H1 (cell line): ENCODE measurements at regions of chr17 and their contacts with region 1.

Region 1: GRCh38 chr17:81440876-81441244 is 45.6 kb downstream of the BAHCC1 start:
- DNase-seq: peak; percentile 50 to 90
- H3K4me3 ChIP-seq: no peak overlapping the region
- H3K27ac ChIP-seq: no peak overlapping the region
- H3K4me1 ChIP-seq: peaks cover 0 to 2% (median under 1%) of the 10 kb centered on the region in 4 experiments; a peak in 3 of 7 replicates
- H3K27me3 ChIP-seq: no peaks in the 10 kb centered on the region
- CTCF ChIP-seq: peak; percentile 88 to 98 (median 94)
- EP300 ChIP-seq: no peak
- POLR2A ChIP-seq: no peak
- RAD21 ChIP-seq: peak; percentile 67 to 73

Region 2: DNA sequence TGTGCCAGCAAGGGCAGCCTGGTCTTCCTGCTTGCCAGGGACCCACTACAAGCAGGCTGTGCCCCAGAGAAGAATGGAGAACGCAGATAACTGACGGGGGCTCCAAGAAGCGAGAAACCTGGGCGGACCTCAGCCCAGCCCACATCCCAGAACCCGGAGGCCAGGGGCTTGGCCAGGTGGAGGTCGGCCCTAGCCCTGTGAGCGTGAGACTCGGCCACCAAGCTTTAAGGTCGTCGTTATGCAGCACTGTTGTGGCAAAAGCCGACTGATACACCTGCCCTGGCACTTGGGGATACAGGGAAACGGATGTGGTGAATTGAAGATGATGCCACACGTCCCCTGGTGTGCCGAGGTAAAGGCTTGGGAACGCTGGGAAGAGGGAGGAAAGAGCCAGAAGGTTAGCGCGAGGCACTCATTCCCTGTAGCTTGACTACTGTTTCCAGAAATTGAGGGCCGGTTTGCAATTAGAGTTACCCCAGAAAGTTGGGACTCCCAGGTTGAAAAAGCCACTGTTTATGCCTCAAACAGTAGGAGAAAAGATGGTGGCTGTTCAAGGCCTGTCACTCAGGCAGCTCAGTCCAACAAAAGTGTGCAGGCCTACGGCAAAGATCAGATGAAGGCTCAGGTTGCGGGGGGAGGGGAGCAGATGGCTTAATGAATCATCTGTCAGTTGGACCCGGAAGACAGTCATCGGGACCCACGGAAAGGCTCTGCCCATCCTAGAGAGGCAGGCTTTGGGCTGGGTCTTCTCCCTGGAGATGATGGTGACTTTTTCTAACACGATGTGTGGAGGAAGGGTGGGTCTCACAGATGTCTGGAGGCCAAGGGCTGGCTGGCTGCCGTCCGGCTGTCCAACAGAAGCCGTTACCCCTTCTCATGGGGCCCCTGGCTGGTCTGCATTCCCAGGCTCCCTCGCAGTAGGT is 91.2 kb before region 1 on chr17:
- CTCF ChIA-PET with region 1: no interaction called
- POLR2A ChIA-PET with region 1: no interaction called
- DNase-seq: no peak
- H3K4me3 ChIP-seq: no peak overlapping the region
- H3K27ac ChIP-seq: no peak overlapping the region
- H3K4me1 ChIP-seq: peaks cover 0 to 7% (median 3%) of the 10 kb centered on the region in 4 experiments; a peak in 3 of 7 replicates
- H3K27me3 ChIP-seq: peaks cover 16 to 41% (median 34%) of the 10 kb centered on the region in 4 experiments
- CTCF ChIP-seq: no peak
- EP300 ChIP-seq: no peak
- POLR2A ChIP-seq: no peak
- RAD21 ChIP-seq: no peak

Region 3: DNA sequence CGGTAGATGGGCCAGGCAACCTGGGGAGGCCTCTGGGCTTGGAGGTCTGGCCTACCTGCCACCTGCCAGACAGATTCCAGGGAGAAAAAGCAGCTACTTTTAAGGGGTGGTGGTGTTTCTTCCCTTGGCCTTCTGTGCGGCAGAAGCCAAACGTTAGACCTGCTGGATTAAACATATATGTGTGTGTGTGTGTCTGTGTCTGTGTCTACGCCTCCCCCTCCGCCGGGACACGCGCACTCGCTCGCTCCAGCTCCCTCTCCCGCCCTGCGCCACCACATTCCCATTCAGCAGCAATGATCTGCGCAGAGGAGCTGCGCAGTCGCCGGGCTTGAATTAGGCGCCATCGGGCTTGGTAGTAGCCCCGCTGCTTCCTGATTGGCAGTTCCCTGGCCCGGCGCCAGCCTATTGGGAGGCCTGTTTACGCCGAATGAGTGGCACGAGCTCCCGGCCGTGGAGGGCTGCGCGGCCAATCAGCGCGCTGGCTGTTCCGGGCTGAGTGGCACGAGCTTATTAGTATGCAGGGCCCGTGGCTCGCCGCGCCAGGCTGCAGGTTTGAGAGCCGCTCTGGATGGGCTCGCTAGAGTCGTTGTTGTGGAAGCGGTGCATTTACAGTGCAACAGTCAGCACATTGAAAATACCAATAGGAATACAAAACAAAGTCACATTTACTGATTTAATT is 45.8 kb before region 1 on chr17 and contains the start of gene BAHCC1:
- CTCF ChIA-PET with region 1: interaction called, 13 read pairs
- POLR2A ChIA-PET with region 1: no interaction called
- DNase-seq: peak; percentile 95 to 97
- H3K4me3 ChIP-seq: peak within 1 kb of the TSS; percentile 37 to 65 (median 47)
- H3K27ac ChIP-seq: no peak within 1 kb of the TSS
- H3K4me1 ChIP-seq: peaks cover 6 to 33% (median 27%) of the 10 kb centered on the region in 4 experiments
- H3K27me3 ChIP-seq: peaks cover 43 to 62% (median 55%) of the 10 kb centered on the region in 4 experiments; a peak in 6 of 7 replicates
- CTCF ChIP-seq: 0 out of 4 replicates have a peak, but pooled peaks of 1 of the 3 experiments have one; percentile 1
- EP300 ChIP-seq: no peak
- POLR2A ChIP-seq: no peak
- RAD21 ChIP-seq: no peak
- total RNA-seq, gene BAHCC1: 0.58 and 0.71 TPM in 2 replicates

Region 4: DNA sequence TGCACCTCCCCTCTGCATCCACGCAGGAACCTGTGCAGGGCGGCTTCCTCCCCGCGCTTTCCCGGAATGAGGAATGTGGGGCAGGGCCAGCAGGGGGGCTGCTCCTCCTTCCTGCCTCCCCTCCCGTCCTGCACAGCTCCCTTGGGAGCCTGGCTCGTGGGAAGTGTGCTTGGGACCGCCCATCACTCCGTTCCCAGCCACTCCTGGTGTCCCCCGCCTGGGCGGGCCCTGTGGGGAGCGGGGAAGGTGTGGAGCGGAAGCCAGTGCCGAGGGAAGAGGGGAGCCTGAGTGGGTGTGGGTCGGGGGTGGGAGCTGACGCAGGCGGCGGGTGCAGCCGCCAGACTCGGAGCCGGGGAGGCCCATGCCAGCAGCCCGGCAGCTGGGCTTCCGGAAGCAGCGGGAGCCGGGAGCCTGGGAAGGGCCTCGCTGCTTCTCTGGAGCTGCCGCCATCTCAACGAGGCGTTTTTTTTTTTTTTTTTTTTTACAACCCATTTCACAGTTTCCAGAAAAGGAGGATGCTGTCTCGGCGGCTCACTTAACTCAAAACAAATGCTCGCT is 21.5 kb before region 1 on chr17:
- CTCF ChIA-PET with region 1: interaction called, 31 read pairs
- POLR2A ChIA-PET with region 1: interaction called, 3 read pairs
- DNase-seq: no peak
- H3K4me3 ChIP-seq: no peak overlapping the region
- H3K27ac ChIP-seq: no peak overlapping the region
- H3K4me1 ChIP-seq: peaks cover 0 to 16% (median 9%) of the 10 kb centered on the region in 4 experiments; a peak in 6 of 7 replicates
- H3K27me3 ChIP-seq: no peaks in the 10 kb centered on the region; a peak in 2 of 7 replicates
- CTCF ChIP-seq: no peak
- EP300 ChIP-seq: no peak
- POLR2A ChIP-seq: no peak
- RAD21 ChIP-seq: no peak

Region 5: GRCh38 chr17:81453712-81454111 is 12.9 kb after region 1 on chr17:
- CTCF ChIA-PET with region 1: interaction called, 39 read pairs
- POLR2A ChIA-PET with region 1: interaction called, 3 read pairs
- DNase-seq: no peak
- H3K4me3 ChIP-seq: no peak overlapping the region
- H3K27ac ChIP-seq: no peak overlapping the region
- H3K4me1 ChIP-seq: peaks cover 0 to 10% (median 6%) of the 10 kb centered on the region in 4 experiments; a peak in 6 of 7 replicates
- H3K27me3 ChIP-seq: no peaks in the 10 kb centered on the region
- CTCF ChIP-seq: no peak
- EP300 ChIP-seq: no peak
- POLR2A ChIP-seq: no peak
- RAD21 ChIP-seq: no peak

Region 6: DNA sequence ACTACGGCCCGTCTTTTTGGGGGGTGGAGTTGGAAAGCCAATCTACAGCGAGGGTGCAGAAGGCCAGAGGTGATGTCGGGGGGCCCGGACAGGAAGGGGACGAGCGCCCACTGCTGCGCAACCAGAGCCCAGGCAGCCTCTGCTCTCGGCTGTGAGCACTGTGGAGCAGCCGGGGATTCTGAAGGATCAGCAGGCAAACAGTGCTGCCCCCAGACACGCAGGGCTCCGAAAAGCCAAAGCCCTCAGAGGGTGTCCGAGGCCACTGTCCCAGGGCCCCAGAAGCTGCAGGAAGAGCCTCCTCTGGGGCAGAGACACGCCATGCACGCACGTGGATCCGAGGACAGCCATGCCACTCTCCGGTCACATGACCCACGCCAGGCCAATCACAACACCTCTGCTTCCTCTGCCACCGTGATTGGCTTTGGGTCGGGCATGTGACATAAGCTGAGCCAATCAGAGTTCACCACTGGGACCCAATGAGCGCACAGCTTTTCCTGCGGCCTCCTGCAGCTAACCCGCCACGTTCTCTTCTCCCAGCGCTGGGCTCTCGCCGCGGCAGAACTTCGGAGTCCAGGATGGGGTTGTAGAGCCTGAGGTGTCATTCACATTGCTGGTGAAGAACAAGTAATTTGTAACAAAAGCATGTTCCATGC is 31.1 kb after region 1 on chr17:
- CTCF ChIA-PET with region 1: interaction called, 21 read pairs
- POLR2A ChIA-PET with region 1: no interaction called
- DNase-seq: no peak
- H3K4me3 ChIP-seq: no peak overlapping the region
- H3K27ac ChIP-seq: no peak overlapping the region
- H3K4me1 ChIP-seq: peaks cover 0 to 3% (median 0%) of the 10 kb centered on the region in 4 experiments; a peak in 2 of 7 replicates
- H3K27me3 ChIP-seq: peaks cover 0 to 4% (median 0%) of the 10 kb centered on the region in 4 experiments; a peak in 1 of 7 replicates
- CTCF ChIP-seq: peak in 1 of 3 experiments; percentile 2; a peak in 2 of 4 replicates
- EP300 ChIP-seq: no peak
- POLR2A ChIP-seq: no peak
- RAD21 ChIP-seq: peak in 1 of 2 experiments; percentile 37; a peak in 3 of 4 replicates